Activated naive CD4-positive, alpha-beta T cell treated with anti-CD3 and anti-CD28 coated beads, Interleukin-2, amount 10 ng/mL, durations not matched to agents 7 days and 5 days (primary cell): ENCODE measurements at regions of chr3 and their contacts with region 1.

Region 1: GRCh38 chr3:50568947-50569749 is at the start of gene HEMK1:
- DNase-seq: peak; percentile 97
- H3K4me3 Mint-ChIP-seq: peak within 1 kb of the TSS; percentile 99
- H3K27ac Mint-ChIP-seq: peak within 1 kb of the TSS; percentile 92
- H3K4me1 Mint-ChIP-seq: peaks cover 76% of the 10 kb centered on the region
- H3K27me3 Mint-ChIP-seq: no peaks in the 10 kb centered on the region

Region 2: GRCh38 chr3:50580683-50581458 is 11.7 kb after region 1 on chr3:
- CTCF ChIA-PET with region 1: interaction called, 213 read pairs
- DNase-seq: peak; percentile 50
- H3K4me3 Mint-ChIP-seq: no peak overlapping the region
- H3K27ac Mint-ChIP-seq: peak overlapping the region; percentile 86
- H3K4me1 Mint-ChIP-seq: peaks cover 88% of the 10 kb centered on the region
- H3K27me3 Mint-ChIP-seq: no peaks in the 10 kb centered on the region

Region 3: GRCh38 chr3:50587806-50588758 is 18.9 kb after region 1 on chr3:
- CTCF ChIA-PET with region 1: interaction called, 213 read pairs
- DNase-seq: peak; percentile 78
- H3K4me3 Mint-ChIP-seq: peak overlapping the region; percentile 51
- H3K27ac Mint-ChIP-seq: peak overlapping the region; percentile 98
- H3K4me1 Mint-ChIP-seq: peaks cover 92% of the 10 kb centered on the region
- H3K27me3 Mint-ChIP-seq: no peaks in the 10 kb centered on the region

Region 4: GRCh38 chr3:50652709-50653108 is 83.6 kb after region 1 on chr3:
- CTCF ChIA-PET with region 1: interaction called, 45 read pairs
- DNase-seq: peak; percentile 74
- H3K4me3 Mint-ChIP-seq: no peak overlapping the region
- H3K27ac Mint-ChIP-seq: no peak overlapping the region
- H3K4me1 Mint-ChIP-seq: peaks cover 26% of the 10 kb centered on the region
- H3K27me3 Mint-ChIP-seq: no peaks in the 10 kb centered on the region

Region 5: DNA sequence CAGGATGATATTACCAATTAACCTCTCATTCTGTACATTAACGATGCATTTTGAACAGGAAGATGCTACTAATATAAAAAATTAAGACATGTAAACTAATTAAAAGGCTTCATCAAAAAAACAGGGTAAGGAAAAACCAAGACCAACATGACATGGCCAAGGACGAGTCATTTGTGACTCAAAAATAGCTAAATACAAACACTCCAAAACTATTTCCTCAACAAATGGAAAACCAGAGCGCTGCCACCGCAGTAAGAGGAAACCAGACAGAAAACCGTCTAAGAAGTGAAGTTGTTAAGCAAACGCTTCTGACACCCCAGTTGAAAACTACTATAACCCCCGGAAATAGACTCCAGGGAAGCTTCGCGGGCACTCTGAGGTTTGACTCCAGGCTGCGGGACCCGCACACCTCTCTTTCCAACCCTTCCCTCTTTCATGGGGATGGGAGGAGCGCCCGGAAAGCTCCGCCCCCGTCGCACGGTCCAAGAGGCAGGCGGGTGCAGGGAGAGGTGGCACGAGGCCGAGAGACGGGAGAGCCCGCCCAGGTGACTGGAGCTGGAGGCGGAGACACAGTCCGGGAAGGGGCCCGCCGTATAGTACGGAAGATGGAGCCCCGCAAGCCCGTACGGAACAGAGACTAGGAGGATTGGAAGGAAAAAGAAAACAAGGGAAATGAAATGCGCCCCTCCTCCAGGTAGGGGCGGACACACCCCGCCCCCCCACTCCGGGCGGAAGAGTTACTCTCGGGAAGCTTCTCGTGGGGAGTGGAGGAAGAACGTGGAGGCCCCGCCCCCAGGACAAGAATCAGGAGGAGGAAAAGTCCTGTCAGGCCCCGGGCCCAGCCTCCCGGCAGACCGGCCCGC is 930.0 kb after region 1 on chr3:
- CTCF ChIA-PET with region 1: no interaction called
- DNase-seq: peak; percentile 92
- H3K4me3 Mint-ChIP-seq: peak overlapping the region; percentile 79
- H3K27ac Mint-ChIP-seq: peak overlapping the region; percentile 92
- H3K4me1 Mint-ChIP-seq: peaks cover 31% of the 10 kb centered on the region
- H3K27me3 Mint-ChIP-seq: peaks cover 8% of the 10 kb centered on the region